SK-N-SH (cell line): ENCODE measurements at regions of chr17 and their contacts with region 1.

Region 1: DNA sequence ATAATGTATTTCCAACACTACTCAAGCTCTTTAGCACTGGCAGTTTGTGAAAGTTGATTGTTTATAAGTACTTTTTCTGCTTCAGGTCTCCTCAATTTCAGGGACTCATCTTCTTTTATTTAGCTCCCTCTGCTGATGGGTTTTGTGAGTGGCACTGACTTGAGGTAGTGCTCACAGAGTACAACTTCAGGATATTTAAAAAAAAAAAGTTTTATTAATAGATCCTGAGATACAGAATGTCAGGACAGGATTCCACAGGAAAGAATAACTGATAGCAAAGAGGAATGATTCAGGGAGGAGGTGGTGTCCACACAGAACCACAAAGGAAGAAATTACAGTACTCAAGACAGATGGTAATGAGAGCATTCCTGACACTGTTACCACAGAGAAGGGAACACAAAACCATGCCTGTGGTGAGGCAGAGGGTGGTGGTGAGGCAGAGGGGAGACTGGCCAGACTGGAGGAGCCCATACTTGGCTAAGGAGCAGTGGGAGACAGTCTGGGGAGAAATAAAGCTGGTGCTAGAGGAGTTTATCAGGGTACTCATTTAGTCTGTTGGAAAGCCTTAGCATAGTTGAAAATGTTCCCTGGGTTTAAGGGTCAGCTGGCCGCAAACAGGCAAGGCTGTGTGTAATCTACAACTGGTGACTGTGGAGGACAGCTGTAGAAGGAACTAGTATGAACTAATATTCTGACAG is 63.7 kb downstream of the SPAG9 start:
- DNase-seq: peak; percentile 49
- H3K4me3 ChIP-seq: peak overlapping the region in 1 of 2 experiments; percentile 5; a peak in 1 of 4 replicates
- H3K27ac ChIP-seq: peak overlapping the region; percentile 51 to 78
- H3K4me1 ChIP-seq: peaks cover 6 to 10% of the 10 kb centered on the region in 2 experiments; a peak in 3 of 4 replicates
- H3K27me3 ChIP-seq: no peaks in the 10 kb centered on the region
- CTCF ChIP-seq: peak; percentile 98
- EP300 ChIP-seq: 0 out of 4 replicates have a peak, but pooled peaks of 1 of the 2 experiments have one; percentile 6
- RAD21 ChIP-seq: peak; percentile 94

Region 2: GRCh38 chr17:50995645-50996044 is 61.3 kb before region 1 on chr17:
- CTCF ChIA-PET with region 1: interaction called, 247 read pairs
- POLR2A ChIA-PET with region 1: no interaction called
- DNase-seq: no peak
- H3K4me3 ChIP-seq: no peak overlapping the region
- H3K27ac ChIP-seq: no peak overlapping the region
- H3K4me1 ChIP-seq: no peaks in the 10 kb centered on the region
- H3K27me3 ChIP-seq: no peaks in the 10 kb centered on the region
- CTCF ChIP-seq: no peak
- EP300 ChIP-seq: no peak
- RAD21 ChIP-seq: no peak

Region 3: GRCh38 chr17:51015145-51015558 is 41.8 kb before region 1 on chr17:
- CTCF ChIA-PET with region 1: interaction called, 25 read pairs
- POLR2A ChIA-PET with region 1: no interaction called
- DNase-seq: no peak
- H3K4me3 ChIP-seq: no peak overlapping the region
- H3K27ac ChIP-seq: peak overlapping the region; percentile 50 to 64
- H3K4me1 ChIP-seq: peaks cover 7 to 16% of the 10 kb centered on the region in 2 experiments; a peak in 3 of 4 replicates
- H3K27me3 ChIP-seq: no peaks in the 10 kb centered on the region
- CTCF ChIP-seq: no peak
- EP300 ChIP-seq: no peak
- RAD21 ChIP-seq: no peak

Region 4: DNA sequence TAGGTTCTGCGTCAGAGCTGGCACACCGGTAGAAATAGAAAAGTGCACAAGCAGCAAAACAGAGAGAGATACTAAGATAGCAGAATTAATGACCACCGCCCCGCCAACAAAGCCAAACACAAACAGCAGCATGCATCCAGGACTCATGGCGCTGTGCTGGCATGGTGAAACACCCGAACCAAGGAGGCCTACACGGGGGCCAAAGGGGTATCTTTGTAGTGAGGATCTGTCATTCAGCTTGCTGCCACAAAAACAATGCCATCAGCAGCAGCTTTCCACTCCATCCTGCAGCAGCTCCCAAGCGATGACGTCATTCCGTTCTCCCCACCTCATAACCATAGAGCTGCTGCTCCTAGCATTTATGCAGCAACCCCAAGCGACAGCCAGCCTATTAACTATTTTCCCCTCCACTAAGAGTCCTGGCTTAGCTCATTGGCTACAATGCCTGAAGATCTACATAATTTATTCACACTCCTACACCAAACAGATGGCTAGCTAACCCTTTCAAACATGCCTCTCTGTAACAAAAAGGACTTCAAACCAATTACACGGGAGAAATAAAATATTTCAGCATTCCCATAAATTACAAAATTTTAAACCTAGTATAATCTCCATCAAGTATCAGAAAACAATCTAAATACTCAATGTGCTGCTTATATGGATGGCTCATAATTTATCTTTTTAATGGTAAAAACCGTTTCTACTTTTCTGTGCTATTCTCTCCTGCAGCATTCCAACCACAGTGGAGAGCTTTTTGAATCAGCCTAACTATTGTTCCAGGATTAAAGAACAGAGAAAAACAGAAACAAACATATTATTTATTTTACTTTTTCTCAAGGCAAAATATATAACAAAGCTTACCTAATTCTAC is 10.2 kb before region 1 on chr17:
- CTCF ChIA-PET with region 1: interaction called, 117 read pairs
- POLR2A ChIA-PET with region 1: interaction called, 3 read pairs
- DNase-seq: peak; percentile 84
- H3K4me3 ChIP-seq: peak overlapping the region; percentile 56 to 60
- H3K27ac ChIP-seq: peak overlapping the region; percentile 71 to 94
- H3K4me1 ChIP-seq: peaks cover 26 to 32% of the 10 kb centered on the region in 2 experiments
- H3K27me3 ChIP-seq: no peaks in the 10 kb centered on the region
- CTCF ChIP-seq: no peak; the same call in 1 of the 2 replicates
- EP300 ChIP-seq: peak in 1 of 2 experiments; percentile 57; a peak in 2 of 4 replicates
- RAD21 ChIP-seq: no peak

Region 5: DNA sequence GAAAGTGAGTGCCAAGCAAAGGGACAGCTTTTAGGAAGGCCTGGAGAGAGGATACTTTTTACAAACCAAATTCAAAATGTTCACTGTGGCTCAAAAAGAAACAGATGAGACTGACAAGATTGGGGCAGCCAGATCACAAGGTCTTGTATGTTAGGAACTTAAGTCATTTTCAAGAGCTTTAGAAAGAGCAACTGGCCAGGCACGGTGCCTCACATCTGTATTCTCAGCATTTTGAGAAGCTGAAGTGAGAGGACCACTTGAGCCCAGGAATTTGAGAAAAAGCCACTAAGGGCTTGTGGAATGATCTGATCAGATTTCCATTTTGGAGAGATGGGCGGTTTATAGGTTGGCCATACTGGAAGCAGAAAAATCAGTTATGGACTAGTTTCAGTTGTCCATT is 46.5 kb after region 1 on chr17:
- CTCF ChIA-PET with region 1: interaction called, 11 read pairs
- POLR2A ChIA-PET with region 1: no interaction called
- DNase-seq: no peak
- H3K4me3 ChIP-seq: no peak overlapping the region
- H3K27ac ChIP-seq: peak overlapping the region in 1 of 2 experiments; percentile 3; a peak in 1 of 4 replicates
- H3K4me1 ChIP-seq: no peaks in the 10 kb centered on the region
- H3K27me3 ChIP-seq: no peaks in the 10 kb centered on the region
- CTCF ChIP-seq: no peak
- EP300 ChIP-seq: no peak
- RAD21 ChIP-seq: no peak